ENCODE measurements at regions of chr7 and their contacts with region 1.

Region 1: GRCh38 chr7:65307651-65308299 is 65.9 kb upstream of the ZNF92 start:
- DNase-seq: peak in 1 of 2 donors; percentile 58
- ATAC-seq: peak; percentile 77
- H3K4me3 ChIP-seq: no peak overlapping the region
- H3K27ac ChIP-seq: no peak overlapping the region
- H3K4me1 ChIP-seq: no peaks in the 10 kb centered on the region
- H3K27me3 ChIP-seq: no peaks in the 10 kb centered on the region

Region 2: DNA sequence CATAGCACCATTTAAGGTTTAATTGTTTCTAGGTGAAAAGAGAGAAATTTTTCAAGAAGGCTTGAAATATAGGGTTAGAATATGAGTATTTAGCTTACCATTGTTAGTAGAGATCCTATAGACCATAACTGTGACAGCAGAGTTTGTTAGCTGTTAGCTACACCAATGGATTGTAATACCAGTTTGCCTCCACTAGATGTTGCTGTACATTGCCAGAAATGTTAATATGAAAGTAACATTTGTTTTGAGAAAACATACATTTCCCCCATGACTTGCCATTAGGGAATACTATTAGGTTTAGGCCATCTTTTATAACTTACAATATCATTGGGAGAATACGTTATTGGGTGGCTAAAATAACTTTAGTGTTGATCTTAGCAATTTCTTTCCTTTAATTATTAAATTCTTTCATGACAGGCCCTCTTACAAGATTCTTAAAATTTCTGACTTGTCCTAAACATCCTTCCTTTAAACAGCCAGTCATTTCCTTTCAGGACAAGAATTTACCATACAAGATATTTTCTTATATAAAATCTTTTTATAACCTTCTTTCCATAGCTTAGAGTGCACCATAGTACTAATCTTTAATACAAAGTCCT is 356.4 kb before region 1 on chr7:
- intact Hi-C with region 1: loop called (anchors 2 kb)
- DNase-seq: no peak
- ATAC-seq: peak; percentile 85
- H3K4me3 ChIP-seq: no peak overlapping the region
- H3K27ac ChIP-seq: no peak overlapping the region
- H3K4me1 ChIP-seq: no peaks in the 10 kb centered on the region
- H3K27me3 ChIP-seq: peaks cover 0 to 1% of the 10 kb centered on the region in 2 donors

Measured in aorta (tissue), 5 donors.